Endothelial cell of umbilical vein (primary cell): ENCODE measurements at regions of chr11 and their contacts with region 1.

Region 1: GRCh38 chr11:14358729-14359439 is at the start of gene RRAS2:
- DNase-seq: peak; percentile 77
- H3K4me3 ChIP-seq: peak within 1 kb of the TSS; percentile 57 to 84 (median 75)
- H3K27ac ChIP-seq: peak within 1 kb of the TSS; percentile 46
- H3K4me1 ChIP-seq: peaks cover 9% of the 10 kb centered on the region
- H3K27me3 ChIP-seq: no peaks in the 10 kb centered on the region
- CTCF ChIP-seq: no peak
- POLR2A ChIP-seq: peak; percentile 85
- total RNA-seq, gene RRAS2: 80.5 and 84.4 TPM in 2 replicates

Region 2: DNA sequence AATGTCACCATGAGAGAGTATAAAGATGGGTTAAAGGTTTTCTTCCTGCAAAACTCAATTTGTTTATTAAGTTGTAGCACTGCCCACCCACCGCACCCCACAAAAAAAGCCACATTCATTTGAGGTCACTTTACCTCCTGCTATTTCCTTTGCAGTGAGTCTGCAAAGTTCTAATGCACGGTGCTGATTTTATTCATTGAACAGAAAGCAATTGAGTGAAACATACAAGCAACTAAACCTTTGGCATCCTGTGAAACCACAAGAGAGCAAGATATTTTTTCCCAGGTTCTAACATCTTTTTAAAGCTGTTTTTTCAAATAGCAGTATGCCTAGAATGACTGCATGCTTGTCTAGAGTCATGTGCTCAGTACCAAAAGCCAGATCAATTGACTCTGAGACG is 38.9 kb before region 1 on chr11:
- CTCF ChIA-PET with region 1: interaction called, 4 read pairs
- POLR2A ChIA-PET with region 1: interaction called, 7 read pairs
- dilution Hi-C with region 1: no loop called
- intact Hi-C with region 1: loop called (anchors 1 kb)
- DNase-seq: no peak
- H3K4me3 ChIP-seq: no peak overlapping the region
- H3K27ac ChIP-seq: no peak overlapping the region
- H3K4me1 ChIP-seq: peaks cover 69% of the 10 kb centered on the region
- H3K27me3 ChIP-seq: no peaks in the 10 kb centered on the region
- CTCF ChIP-seq: no peak
- POLR2A ChIP-seq: no peak

Region 3: GRCh38 chr11:14380947-14381561 is 22.2 kb after region 1 on chr11:
- CTCF ChIA-PET with region 1: interaction called, 3 read pairs
- POLR2A ChIA-PET with region 1: no interaction called
- dilution Hi-C with region 1: no loop called
- intact Hi-C with region 1: loop called (anchors 2 kb)
- DNase-seq: peak; percentile 73
- H3K4me3 ChIP-seq: peak overlapping the region; percentile 24 to 55 (median 40)
- H3K27ac ChIP-seq: peak overlapping the region; percentile 15
- H3K4me1 ChIP-seq: peaks cover 12% of the 10 kb centered on the region
- H3K27me3 ChIP-seq: no peaks in the 10 kb centered on the region
- CTCF ChIP-seq: no peak
- POLR2A ChIP-seq: peak; percentile 60

Region 4: GRCh38 chr11:14443638-14444037 is 84.8 kb after region 1 on chr11:
- CTCF ChIA-PET with region 1: no interaction called
- POLR2A ChIA-PET with region 1: no interaction called
- dilution Hi-C with region 1: no loop called
- intact Hi-C with region 1: loop called (anchors 1 kb)
- DNase-seq: no peak
- H3K4me3 ChIP-seq: no peak overlapping the region
- H3K27ac ChIP-seq: no peak overlapping the region
- H3K4me1 ChIP-seq: peaks cover 29% of the 10 kb centered on the region
- H3K27me3 ChIP-seq: no peaks in the 10 kb centered on the region
- CTCF ChIP-seq: no peak
- POLR2A ChIP-seq: no peak